RWPE1 (cell line): ENCODE measurements at regions of chr1 and their contacts with region 1.

Region 1: GRCh38 chr1:66251546-66251945 is 282.4 kb upstream of the SGIP1 start:
- DNase-seq: no peak
- H3K27ac ChIP-seq: no peak overlapping the region
- CTCF ChIP-seq: no peak

Region 2: GRCh38 chr1:65890201-65890843 is 361.2 kb before region 1 on chr1:
- CTCF ChIA-PET with region 1: no interaction called
- POLR2A ChIA-PET with region 1: no interaction called
- DNase-seq: no peak
- H3K27ac ChIP-seq: no peak overlapping the region
- CTCF ChIP-seq: no peak

Region 3: GRCh38 chr1:66446261-66447001 is 194.9 kb after region 1 on chr1:
- CTCF ChIA-PET with region 1: interaction called, 17 read pairs
- POLR2A ChIA-PET with region 1: no interaction called
- DNase-seq: peak; percentile 64
- H3K27ac ChIP-seq: no peak overlapping the region
- CTCF ChIP-seq: peak; percentile 78